B cell (primary cell): ENCODE measurements at regions of chr13 and their contacts with region 1.

Region 1: GRCh38 chr13:78595495-78596398 is 7.6 kb downstream of the POU4F1 start:
- DNase-seq: peak; percentile 50
- ATAC-seq: no peak
- H3K4me3 ChIP-seq: no peak overlapping the region
- H3K4me3 Mint-ChIP-seq: no peak overlapping the region
- H3K27ac ChIP-seq: no peak overlapping the region
- H3K27ac Mint-ChIP-seq: peak overlapping the region; percentile 20
- H3K4me1 ChIP-seq: peaks cover 20 to 51% of the 10 kb centered on the region in 2 donors
- H3K4me1 Mint-ChIP-seq: peaks cover 7% of the 10 kb centered on the region
- H3K27me3 ChIP-seq: peaks cover 6 to 93% (median 77%) of the 10 kb centered on the region in 4 experiments
- H3K27me3 Mint-ChIP-seq: peaks cover 80% of the 10 kb centered on the region
- CTCF ChIP-seq: no peak

Region 2: DNA sequence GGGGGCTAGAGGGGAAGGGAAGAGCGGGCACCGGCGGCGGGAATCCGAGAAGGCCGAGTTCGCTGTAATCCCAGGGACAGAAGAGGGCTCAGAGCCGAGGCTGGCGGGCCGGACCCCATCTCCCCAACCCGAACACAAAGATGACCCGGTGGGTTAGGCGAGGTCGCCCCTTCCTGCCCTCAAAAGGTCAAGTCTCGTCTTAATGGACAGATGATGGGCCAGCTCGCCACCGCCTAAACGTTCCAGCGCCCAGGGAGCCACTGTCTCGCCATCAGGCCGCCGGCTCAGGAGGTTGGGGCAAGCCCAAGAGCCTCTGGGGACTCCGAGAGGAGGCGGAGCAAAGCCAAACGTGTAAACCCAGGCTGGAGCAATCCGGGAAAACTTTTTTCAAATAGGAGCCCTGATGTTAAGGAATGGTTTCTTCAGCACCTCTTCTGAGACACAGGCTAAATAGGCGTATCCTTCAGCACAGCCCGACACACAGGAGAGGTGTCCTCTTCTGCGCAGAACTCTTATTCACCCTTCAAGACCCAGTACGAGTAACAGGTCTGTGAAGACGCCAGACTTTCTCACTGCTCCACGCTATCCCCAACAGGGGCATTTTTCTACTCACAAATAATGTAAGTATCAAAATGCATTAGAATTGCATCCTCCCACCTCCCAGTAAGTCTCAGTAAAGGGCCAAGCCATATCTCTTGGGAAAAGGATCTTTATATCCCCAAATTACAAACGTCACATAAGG is 13.9 kb after region 1 on chr13:
- CTCF ChIA-PET with region 1: no interaction called
- POLR2A ChIA-PET with region 1: interaction called, 3 read pairs
- intact Hi-C with region 1: loop called (anchors 1 kb)
- DNase-seq: peak; percentile 52
- ATAC-seq: peak; percentile 32
- H3K4me3 ChIP-seq: peak overlapping the region in 4 of 5 experiments; percentile 33 to 57 (median 46)
- H3K4me3 Mint-ChIP-seq: peak overlapping the region; percentile 84
- H3K27ac ChIP-seq: no peak overlapping the region
- H3K27ac Mint-ChIP-seq: no peak overlapping the region
- H3K4me1 ChIP-seq: peaks cover 38 to 51% of the 10 kb centered on the region in 2 donors
- H3K4me1 Mint-ChIP-seq: peaks cover 46% of the 10 kb centered on the region
- H3K27me3 ChIP-seq: peaks cover 2 to 58% (median 56%) of the 10 kb centered on the region in 4 experiments
- H3K27me3 Mint-ChIP-seq: peaks cover 61% of the 10 kb centered on the region
- CTCF ChIP-seq: no peak